Cardiac septum (tissue), 1 donor: ENCODE measurements at regions of chr12 and their contacts with region 1.

Region 1: GRCh38 chr12:111529424-111530368 is 69.4 kb downstream of the ATXN2 start:
- DNase-seq: no peak

Region 2: GRCh38 chr12:111330800-111331752 is 198.6 kb before region 1 on chr12:
- intact Hi-C with region 1: loop called (anchors 5 kb)
- DNase-seq: no peak

Region 3: DNA sequence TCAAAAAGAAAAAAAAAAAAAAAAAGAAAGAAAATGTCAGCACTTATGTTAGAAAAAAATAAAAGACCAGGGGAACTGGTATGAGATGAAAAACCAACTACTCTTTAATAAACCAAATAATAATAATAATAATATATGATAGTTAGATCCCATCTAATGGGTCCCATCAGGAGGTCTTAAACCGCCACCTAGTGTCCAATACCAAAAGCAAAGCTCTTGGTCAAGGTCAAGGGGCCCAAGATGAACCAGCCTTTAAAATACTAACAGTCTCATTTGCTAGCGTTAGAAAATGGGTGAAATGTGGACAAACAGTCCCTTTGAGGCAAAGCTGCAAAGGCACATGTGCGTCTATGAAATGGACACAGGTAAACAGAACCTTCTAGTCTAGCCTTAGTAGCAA is 143.8 kb after region 1 on chr12:
- intact Hi-C with region 1: loop called (anchors 10 kb)
- DNase-seq: no peak

Region 4: GRCh38 chr12:111868676-111869588 is 339.2 kb after region 1 on chr12:
- intact Hi-C with region 1: no loop called
- DNase-seq: no peak